ENCODE measurements at regions of chr7 and their contacts with region 1.

Region 1: GRCh38 chr7:142811154-142811737 is 40.5 kb downstream of the PRSS2 start:
- DNase-seq: peak in 1 of 2 donors; percentile 88
- ATAC-seq: no peak
- H3K4me3 ChIP-seq: no peak overlapping the region
- H3K4me3 Mint-ChIP-seq: peak overlapping the region; percentile 64
- H3K27ac ChIP-seq: peak overlapping the region; percentile 98
- H3K27ac Mint-ChIP-seq: peak overlapping the region; percentile 92 to 100
- H3K4me1 ChIP-seq: peaks cover 50% of the 10 kb centered on the region
- H3K4me1 Mint-ChIP-seq: peaks cover 52% of the 10 kb centered on the region in 2 donors
- H3K27me3 ChIP-seq: no peaks in the 10 kb centered on the region
- H3K27me3 Mint-ChIP-seq: no peaks in the 10 kb centered on the region
- CTCF ChIP-seq: peak; percentile 82

Region 2: GRCh38 chr7:142279601-142280000 is 531.6 kb before region 1 on chr7:
- intact Hi-C with region 1: no loop called
- DNase-seq: no peak
- ATAC-seq: no peak
- H3K4me3 ChIP-seq: no peak overlapping the region
- H3K4me3 Mint-ChIP-seq: no peak overlapping the region
- H3K27ac ChIP-seq: no peak overlapping the region
- H3K27ac Mint-ChIP-seq: no peak overlapping the region
- H3K4me1 ChIP-seq: no peaks in the 10 kb centered on the region
- H3K4me1 Mint-ChIP-seq: no peaks in the 10 kb centered on the region
- H3K27me3 ChIP-seq: no peaks in the 10 kb centered on the region
- H3K27me3 Mint-ChIP-seq: peaks cover 24 to 66% of the 10 kb centered on the region in 2 donors
- CTCF ChIP-seq: no peak

Region 3: GRCh38 chr7:142632291-142633134 is 178.7 kb before region 1 on chr7:
- intact Hi-C with region 1: loop called (anchors 1 kb)
- DNase-seq: peak; percentile 56 to 84
- ATAC-seq: peak; percentile 88 to 99 (median 95)
- H3K4me3 ChIP-seq: no peak overlapping the region
- H3K4me3 Mint-ChIP-seq: no peak overlapping the region
- H3K27ac ChIP-seq: no peak overlapping the region
- H3K27ac Mint-ChIP-seq: peak overlapping the region in 1 of 2 donors; percentile 15
- H3K4me1 ChIP-seq: peaks cover 3% of the 10 kb centered on the region
- H3K4me1 Mint-ChIP-seq: peaks cover 16 to 20% of the 10 kb centered on the region in 2 donors
- H3K27me3 ChIP-seq: no peaks in the 10 kb centered on the region
- H3K27me3 Mint-ChIP-seq: peaks cover 7 to 9% of the 10 kb centered on the region in 2 donors
- CTCF ChIP-seq: peak; percentile 82

Region 4: DNA sequence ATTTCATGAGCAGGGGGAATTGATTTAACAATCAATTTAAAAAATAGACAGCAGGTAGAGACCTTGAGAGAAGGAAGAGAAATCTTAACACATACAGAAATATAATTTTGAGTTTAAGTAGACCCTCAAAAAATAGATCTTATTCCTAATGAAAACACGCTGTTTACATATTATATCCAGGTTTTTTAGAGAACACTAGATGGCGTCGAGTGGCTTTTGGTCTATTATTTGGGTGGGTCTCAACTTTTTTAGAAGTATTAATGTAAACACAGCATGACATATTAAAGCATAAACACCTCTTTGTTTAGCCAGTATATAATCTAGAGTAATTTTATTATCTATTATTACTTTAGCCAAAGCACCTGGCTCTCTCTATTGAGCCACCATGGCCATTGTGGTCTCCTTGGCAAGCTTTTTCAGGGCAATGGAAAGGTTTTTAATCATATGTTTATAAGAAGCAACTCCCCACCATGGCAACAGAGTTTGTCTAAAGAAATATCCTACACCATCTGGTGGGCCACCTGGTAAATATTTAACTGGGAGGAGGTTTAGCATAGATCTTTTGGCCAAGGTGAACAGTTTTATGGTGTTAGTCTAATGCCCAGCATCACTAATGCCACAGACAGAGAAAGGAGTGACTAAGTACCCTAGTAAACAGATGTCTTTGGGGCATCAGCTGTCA is 121.7 kb before region 1 on chr7:
- intact Hi-C with region 1: loop called (anchors 5 kb)
- DNase-seq: no peak
- ATAC-seq: no peak
- H3K4me3 ChIP-seq: no peak overlapping the region
- H3K4me3 Mint-ChIP-seq: no peak overlapping the region
- H3K27ac ChIP-seq: no peak overlapping the region
- H3K27ac Mint-ChIP-seq: peak overlapping the region; percentile 74 to 84
- H3K4me1 ChIP-seq: peaks cover 9% of the 10 kb centered on the region
- H3K4me1 Mint-ChIP-seq: peaks cover 39 to 55% of the 10 kb centered on the region in 2 donors
- H3K27me3 ChIP-seq: no peaks in the 10 kb centered on the region
- H3K27me3 Mint-ChIP-seq: no peaks in the 10 kb centered on the region
- CTCF ChIP-seq: no peak

Region 5: GRCh38 chr7:142718313-142718712 is 92.9 kb before region 1 on chr7:
- intact Hi-C with region 1: loop called (anchors 1 kb)
- DNase-seq: no peak
- ATAC-seq: peak; percentile 13 to 25 (median 23)
- H3K4me3 ChIP-seq: no peak overlapping the region
- H3K4me3 Mint-ChIP-seq: peak overlapping the region; percentile 93
- H3K27ac ChIP-seq: peak overlapping the region; percentile 56
- H3K27ac Mint-ChIP-seq: peak overlapping the region; percentile 91 to 92
- H3K4me1 ChIP-seq: peaks cover 73% of the 10 kb centered on the region
- H3K4me1 Mint-ChIP-seq: peaks cover 75 to 100% of the 10 kb centered on the region in 2 donors
- H3K27me3 ChIP-seq: no peaks in the 10 kb centered on the region
- H3K27me3 Mint-ChIP-seq: peaks cover 0 to 2% of the 10 kb centered on the region in 2 donors
- CTCF ChIP-seq: no peak

Region 6: DNA sequence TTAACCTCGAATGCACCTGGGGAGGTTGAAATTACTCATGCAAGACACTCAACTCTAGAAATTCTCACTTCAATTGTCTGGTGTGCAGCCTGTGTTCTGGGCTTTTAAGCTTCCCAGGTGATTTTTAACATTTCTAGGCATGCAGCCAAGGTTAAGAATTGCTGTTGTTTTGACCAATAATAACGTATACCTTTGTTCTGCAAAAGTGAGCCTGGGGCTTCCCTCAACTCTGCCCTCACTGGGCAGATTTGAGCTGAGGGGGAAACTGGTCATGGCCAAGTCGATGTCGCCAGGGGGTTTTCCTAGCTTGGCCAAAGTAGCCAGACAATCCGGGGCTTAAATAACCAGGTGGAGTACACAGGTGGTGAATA is 39.9 kb before region 1 on chr7:
- intact Hi-C with region 1: no loop called
- DNase-seq: no peak
- ATAC-seq: no peak
- H3K4me3 ChIP-seq: no peak overlapping the region
- H3K4me3 Mint-ChIP-seq: no peak overlapping the region
- H3K27ac ChIP-seq: no peak overlapping the region
- H3K27ac Mint-ChIP-seq: peak overlapping the region in 1 of 2 donors; percentile 7
- H3K4me1 ChIP-seq: peaks cover 5% of the 10 kb centered on the region
- H3K4me1 Mint-ChIP-seq: peaks cover 59 to 65% of the 10 kb centered on the region in 2 donors
- H3K27me3 ChIP-seq: no peaks in the 10 kb centered on the region
- H3K27me3 Mint-ChIP-seq: no peaks in the 10 kb centered on the region
- CTCF ChIP-seq: no peak

Region 7: GRCh38 chr7:142796608-142797385 is 14.4 kb before region 1 on chr7:
- intact Hi-C with region 1: loop called (anchors 1 kb)
- DNase-seq: peak in 1 of 2 donors; percentile 32
- ATAC-seq: peak; percentile 19 to 38 (median 36)
- H3K4me3 ChIP-seq: peak overlapping the region; percentile 93
- H3K4me3 Mint-ChIP-seq: peak overlapping the region; percentile 99
- H3K27ac ChIP-seq: peak overlapping the region; percentile 98
- H3K27ac Mint-ChIP-seq: peak overlapping the region; percentile 92 to 100
- H3K4me1 ChIP-seq: peaks cover 64% of the 10 kb centered on the region
- H3K4me1 Mint-ChIP-seq: peaks cover 76 to 92% of the 10 kb centered on the region in 2 donors
- H3K27me3 ChIP-seq: no peaks in the 10 kb centered on the region
- H3K27me3 Mint-ChIP-seq: no peaks in the 10 kb centered on the region
- CTCF ChIP-seq: no peak

Region 8: DNA sequence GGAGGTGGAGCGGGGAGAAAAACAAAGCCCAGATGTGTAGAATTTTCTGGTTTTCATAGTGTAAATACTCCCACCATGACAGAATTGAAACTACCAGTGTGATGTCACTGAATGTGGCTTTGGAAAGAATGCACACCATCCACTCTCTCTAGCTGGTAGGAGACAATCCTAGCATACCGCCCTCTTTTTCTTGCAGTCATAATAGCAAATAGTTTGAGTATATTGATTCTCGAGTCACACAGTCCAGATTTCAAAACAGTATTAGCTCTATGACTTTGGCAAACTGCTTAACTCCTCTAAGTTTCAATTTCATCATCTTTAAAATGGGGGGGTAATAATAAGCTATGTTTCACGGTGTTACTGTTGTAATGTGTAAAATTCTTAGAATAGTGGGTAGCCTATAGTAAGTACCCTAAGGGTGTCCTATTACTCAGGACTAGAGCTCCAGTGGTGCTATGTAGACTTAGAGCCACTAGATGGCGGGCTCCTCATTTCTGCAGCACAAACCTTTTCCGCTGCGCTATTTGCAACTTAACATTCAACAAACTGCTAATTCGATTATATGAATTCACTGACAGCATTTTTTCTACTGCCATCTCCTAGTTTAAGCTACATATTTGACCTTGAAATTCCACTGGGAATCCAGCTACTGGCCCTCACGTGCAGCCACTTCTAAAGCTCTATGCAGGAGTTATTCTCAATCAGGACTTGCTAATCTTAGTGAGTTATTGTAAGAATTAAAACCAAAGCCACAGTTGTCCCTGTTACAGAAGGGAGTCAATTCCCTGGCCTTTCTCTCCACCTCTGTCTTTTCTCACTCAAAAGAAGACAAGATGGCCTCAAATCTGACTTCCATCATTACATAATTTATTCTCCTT is 429.3 kb after region 1 on chr7:
- intact Hi-C with region 1: no loop called
- DNase-seq: peak; percentile 37 to 88
- ATAC-seq: peak; percentile 93 to 99 (median 97)
- H3K4me3 ChIP-seq: no peak overlapping the region
- H3K4me3 Mint-ChIP-seq: no peak overlapping the region
- H3K27ac ChIP-seq: no peak overlapping the region
- H3K27ac Mint-ChIP-seq: no peak overlapping the region
- H3K4me1 ChIP-seq: peaks cover 3% of the 10 kb centered on the region
- H3K4me1 Mint-ChIP-seq: peaks cover 0 to 3% of the 10 kb centered on the region in 2 donors
- H3K27me3 ChIP-seq: no peaks in the 10 kb centered on the region
- H3K27me3 Mint-ChIP-seq: peaks cover 16 to 36% of the 10 kb centered on the region in 2 donors
- CTCF ChIP-seq: peak; percentile 97